Activated CD8-positive, alpha-beta T cell treated with anti-CD3 and anti-CD28 coated beads for 36 hours (primary cell): ENCODE measurements at regions of chr1 and their contacts with region 1.

Region 1: DNA sequence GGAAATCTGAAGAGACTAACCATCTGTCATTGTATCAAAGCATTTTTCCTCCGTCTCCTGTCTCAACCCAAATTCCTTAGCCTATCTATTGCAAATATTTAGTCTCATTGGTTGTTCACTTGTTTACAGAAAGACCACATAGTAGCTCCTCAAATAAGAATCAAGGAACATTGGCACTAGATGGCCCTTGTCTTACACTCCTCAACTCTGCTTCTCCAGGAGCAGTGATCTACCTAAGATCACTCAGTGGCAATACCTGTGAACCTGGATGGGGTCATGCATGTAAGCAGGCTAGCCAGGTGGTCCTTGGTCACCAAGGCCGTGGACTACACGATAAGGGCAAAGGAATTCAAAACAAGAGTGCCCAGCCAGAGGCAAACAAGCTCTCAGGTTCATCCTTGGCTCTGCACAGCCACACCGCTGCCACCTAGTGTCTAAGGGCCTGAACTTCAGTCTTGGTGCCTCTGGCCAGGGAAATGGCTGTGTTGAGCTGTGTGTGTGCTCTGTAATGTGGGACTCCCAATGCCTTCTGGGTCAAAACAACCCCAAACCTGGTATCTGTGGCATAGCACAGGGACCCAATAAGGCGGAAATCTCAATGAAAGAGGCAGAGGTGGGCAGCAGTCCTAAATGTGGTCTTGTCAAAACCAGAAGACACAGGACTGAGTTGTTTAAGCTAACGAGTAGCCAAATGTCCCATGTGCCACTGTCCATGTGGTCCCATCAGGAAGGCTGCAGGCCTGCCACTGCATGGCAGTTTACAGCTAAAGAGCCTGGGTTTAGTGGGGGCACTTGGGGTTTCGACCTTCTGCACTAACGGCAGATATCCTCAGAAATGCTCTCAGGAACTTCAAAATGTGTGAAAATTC is 54.5 kb downstream of the GPR161 start:
- DNase-seq: peak; percentile 81
- ATAC-seq: peak; percentile 96
- H3K4me3 Mint-ChIP-seq: no peak overlapping the region
- H3K27ac Mint-ChIP-seq: no peak overlapping the region
- H3K4me1 Mint-ChIP-seq: no peaks in the 10 kb centered on the region
- H3K27me3 Mint-ChIP-seq: peaks cover 2% of the 10 kb centered on the region
- CTCF ChIP-seq: peak; percentile 74

Region 2: DNA sequence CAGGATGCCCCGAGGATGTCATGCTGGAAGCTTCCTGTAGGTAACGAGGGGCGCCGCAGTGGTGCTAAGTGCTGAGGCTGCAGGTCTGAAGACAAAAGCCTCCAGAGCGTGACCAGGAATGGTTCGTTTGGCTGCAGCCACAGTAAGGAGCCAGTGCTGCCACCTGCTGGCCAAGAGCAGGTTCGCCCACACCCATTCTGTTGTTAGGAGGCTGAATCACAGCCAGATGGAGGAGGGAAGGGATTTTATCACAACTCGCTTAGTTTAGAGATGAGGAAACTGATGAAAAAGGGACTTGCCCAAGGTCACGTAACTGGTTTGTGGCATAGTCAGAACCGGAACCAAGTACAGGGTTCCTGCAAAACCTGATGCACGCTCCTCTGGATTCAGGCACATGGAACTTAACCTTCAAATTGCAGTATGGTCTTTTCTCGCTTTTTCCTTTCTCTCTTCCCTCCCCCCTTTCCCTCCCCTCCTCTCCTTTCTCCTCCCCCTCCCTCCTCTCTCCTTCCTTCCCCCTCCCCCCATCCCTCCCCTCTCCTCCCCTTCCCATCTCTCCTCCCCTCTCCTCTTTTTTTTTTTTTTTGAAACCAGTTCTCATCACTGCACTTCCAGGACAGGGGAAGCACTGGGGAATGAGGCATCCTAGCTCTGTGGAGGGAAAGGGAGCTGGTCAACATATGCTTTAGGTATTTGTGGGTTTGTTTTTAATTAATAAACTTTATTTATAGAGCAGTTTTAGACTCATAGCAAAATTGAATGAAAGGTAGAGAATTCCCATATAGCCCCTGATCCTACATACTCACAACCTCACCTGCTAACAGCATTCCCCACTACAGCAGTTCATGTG is 278.7 kb before region 1 on chr1:
- CTCF ChIA-PET with region 1: interaction called, 5 read pairs
- POLR2A ChIA-PET with region 1: no interaction called
- intact Hi-C with region 1: loop called (anchors 5 kb)
- DNase-seq: peak; percentile 97
- ATAC-seq: peak; percentile 94
- H3K4me3 Mint-ChIP-seq: peak overlapping the region; percentile 57
- H3K27ac Mint-ChIP-seq: peak overlapping the region; percentile 85
- H3K4me1 Mint-ChIP-seq: peaks cover 28% of the 10 kb centered on the region
- H3K27me3 Mint-ChIP-seq: no peaks in the 10 kb centered on the region
- CTCF ChIP-seq: peak; percentile 97

Region 3: DNA sequence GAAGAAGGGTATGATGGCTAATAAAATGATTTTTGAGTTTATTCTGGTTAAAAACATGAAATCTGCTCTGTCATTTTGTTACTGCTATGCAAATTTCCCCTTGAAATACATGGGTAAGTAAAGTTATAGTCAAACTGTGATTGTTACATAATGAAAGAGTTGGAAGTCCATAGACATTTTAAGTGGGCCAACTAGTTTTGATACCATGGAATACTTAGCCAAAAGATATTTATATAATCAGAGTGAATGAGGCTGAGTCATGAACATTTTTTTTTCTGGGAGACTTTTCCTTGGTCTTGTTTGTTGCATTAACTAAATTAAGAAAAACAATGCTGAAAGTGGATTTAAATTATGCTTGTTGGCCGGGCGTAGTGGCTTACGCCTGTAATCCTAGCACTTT is 87.2 kb before region 1 on chr1:
- CTCF ChIA-PET with region 1: no interaction called
- POLR2A ChIA-PET with region 1: no interaction called
- intact Hi-C with region 1: no loop called
- DNase-seq: no peak
- ATAC-seq: no peak
- H3K4me3 Mint-ChIP-seq: no peak overlapping the region
- H3K27ac Mint-ChIP-seq: no peak overlapping the region
- H3K4me1 Mint-ChIP-seq: no peaks in the 10 kb centered on the region
- H3K27me3 Mint-ChIP-seq: no peaks in the 10 kb centered on the region
- CTCF ChIP-seq: no peak

Region 4: GRCh38 chr1:168054117-168054516 is 28.1 kb before region 1 on chr1:
- CTCF ChIA-PET with region 1: interaction called, 11 read pairs
- POLR2A ChIA-PET with region 1: no interaction called
- intact Hi-C with region 1: no loop called
- DNase-seq: no peak
- ATAC-seq: no peak
- H3K4me3 Mint-ChIP-seq: no peak overlapping the region
- H3K27ac Mint-ChIP-seq: no peak overlapping the region
- H3K4me1 Mint-ChIP-seq: no peaks in the 10 kb centered on the region
- H3K27me3 Mint-ChIP-seq: no peaks in the 10 kb centered on the region
- CTCF ChIP-seq: no peak

Region 5: DNA sequence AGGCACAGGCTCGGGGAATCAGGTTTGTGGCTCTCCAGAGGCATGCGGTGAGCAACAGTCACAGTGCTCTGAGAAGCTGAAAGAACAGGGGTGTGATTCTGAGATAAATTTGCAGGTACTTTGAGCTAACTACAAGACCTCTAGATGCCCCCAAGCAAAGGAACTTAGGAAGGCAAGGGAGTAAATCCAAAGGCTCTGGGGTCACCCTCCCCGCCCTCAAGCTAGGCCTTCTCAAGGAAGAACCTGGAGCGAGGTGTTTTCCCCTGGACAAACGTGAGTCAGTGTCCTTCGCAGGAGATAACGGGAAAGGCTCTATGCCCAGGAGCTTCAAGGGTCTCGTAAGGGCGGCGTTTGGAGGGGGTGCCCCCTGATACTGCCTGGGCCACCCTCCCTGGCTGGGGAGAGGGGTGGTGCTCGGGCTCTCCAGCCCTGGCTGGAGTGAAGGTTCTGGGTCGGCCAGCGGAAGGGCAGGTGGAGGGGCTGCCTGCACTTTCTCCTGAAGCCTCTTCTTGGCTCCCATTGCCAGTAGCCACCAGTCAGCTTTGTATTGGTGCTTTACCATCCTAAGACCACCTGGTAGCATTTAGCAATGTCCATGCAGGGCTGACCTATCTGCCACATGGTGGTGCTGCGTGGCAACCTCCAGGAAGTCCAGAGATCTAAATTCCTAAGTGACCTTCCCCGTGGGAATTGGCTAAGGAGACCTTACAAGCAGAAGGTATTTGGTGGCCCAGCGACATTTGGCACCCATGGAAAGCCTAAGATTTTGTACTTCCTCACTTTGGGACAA is 10.5 kb after region 1 on chr1:
- CTCF ChIA-PET with region 1: interaction called, 45 read pairs
- POLR2A ChIA-PET with region 1: interaction called, 4 read pairs
- intact Hi-C with region 1: no loop called
- DNase-seq: no peak
- ATAC-seq: no peak
- H3K4me3 Mint-ChIP-seq: no peak overlapping the region
- H3K27ac Mint-ChIP-seq: no peak overlapping the region
- H3K4me1 Mint-ChIP-seq: no peaks in the 10 kb centered on the region
- H3K27me3 Mint-ChIP-seq: no peaks in the 10 kb centered on the region
- CTCF ChIP-seq: no peak

Region 6: DNA sequence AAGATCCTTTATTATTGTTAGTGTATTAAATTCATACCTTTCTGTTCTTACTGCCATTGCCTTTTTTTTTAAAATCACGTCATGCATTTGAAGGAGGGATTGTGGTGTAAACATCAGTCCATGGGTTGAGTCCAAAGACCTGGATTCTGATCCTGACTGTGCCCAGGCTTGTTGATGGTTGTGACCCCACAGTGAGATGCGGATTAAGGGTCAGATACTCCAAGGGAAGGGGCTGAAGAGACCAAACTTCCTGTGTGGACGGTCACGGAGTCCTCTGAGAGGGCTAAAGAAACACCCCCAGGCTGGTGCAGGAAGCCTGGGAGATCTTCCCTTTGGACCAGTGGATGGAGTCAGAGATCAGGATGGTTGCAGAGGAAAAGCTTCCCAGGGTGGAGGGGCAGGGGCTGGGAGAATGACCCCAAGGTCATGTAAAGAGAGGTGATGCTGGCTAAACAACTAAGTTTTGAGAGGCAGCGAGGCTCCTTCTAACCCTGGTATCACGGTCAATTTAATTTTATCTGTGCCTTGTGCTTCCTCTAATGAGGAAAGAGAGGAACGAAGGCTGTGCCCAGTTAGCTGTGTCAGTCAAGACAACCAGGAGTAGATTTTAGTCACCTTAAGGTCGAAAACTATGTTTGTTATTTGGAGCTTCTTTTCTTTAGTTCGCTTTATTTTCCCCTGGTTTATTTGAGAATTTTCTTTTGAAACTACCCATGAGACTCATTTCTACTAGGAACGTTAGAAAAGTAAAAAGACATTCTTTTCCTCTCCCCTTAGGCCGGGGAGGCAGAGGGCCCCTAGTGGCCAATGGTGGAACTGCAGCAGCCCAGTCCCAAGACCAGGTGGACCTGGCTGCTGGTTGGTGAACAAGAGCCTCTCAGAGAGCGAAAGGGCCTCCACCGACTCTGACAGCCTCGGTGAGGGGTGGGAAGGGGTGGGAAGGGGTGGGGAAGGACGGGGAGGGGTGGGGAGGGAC is 63.2 kb after region 1 on chr1:
- CTCF ChIA-PET with region 1: interaction called, 10 read pairs
- POLR2A ChIA-PET with region 1: no interaction called
- intact Hi-C with region 1: no loop called
- DNase-seq: peak; percentile 91
- ATAC-seq: peak; percentile 100
- H3K4me3 Mint-ChIP-seq: peak overlapping the region; percentile 29
- H3K27ac Mint-ChIP-seq: no peak overlapping the region
- H3K4me1 Mint-ChIP-seq: peaks cover 9% of the 10 kb centered on the region
- H3K27me3 Mint-ChIP-seq: no peaks in the 10 kb centered on the region
- CTCF ChIP-seq: peak; percentile 93

Region 7: DNA sequence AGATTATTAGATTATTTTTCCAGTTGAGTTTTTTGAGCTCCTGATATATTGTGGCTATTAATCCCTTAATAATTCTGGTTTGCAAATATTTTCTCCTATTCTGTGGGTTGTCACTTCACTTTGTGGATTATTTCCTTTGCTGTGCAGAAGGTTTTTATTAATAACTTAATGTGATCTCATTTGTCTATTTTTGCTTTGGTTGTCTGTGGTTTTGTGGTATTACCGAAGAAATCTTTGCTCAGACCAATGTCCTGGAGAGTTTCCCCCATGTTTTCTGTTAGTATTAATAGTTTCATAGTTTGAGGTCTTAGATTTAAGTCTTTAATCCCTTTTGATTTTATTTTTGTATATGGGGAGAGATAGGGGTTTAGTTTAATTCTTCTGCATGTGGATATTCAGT is 191.3 kb after region 1 on chr1:
- CTCF ChIA-PET with region 1: no interaction called
- POLR2A ChIA-PET with region 1: no interaction called
- intact Hi-C with region 1: no loop called
- DNase-seq: no peak
- ATAC-seq: no peak
- H3K4me3 Mint-ChIP-seq: no peak overlapping the region
- H3K27ac Mint-ChIP-seq: no peak overlapping the region
- H3K4me1 Mint-ChIP-seq: peaks cover 2% of the 10 kb centered on the region
- H3K27me3 Mint-ChIP-seq: no peaks in the 10 kb centered on the region
- CTCF ChIP-seq: no peak